GM10248 (cell line): ENCODE measurements at regions of chr7 and their contacts with region 1.

Region 1: DNA sequence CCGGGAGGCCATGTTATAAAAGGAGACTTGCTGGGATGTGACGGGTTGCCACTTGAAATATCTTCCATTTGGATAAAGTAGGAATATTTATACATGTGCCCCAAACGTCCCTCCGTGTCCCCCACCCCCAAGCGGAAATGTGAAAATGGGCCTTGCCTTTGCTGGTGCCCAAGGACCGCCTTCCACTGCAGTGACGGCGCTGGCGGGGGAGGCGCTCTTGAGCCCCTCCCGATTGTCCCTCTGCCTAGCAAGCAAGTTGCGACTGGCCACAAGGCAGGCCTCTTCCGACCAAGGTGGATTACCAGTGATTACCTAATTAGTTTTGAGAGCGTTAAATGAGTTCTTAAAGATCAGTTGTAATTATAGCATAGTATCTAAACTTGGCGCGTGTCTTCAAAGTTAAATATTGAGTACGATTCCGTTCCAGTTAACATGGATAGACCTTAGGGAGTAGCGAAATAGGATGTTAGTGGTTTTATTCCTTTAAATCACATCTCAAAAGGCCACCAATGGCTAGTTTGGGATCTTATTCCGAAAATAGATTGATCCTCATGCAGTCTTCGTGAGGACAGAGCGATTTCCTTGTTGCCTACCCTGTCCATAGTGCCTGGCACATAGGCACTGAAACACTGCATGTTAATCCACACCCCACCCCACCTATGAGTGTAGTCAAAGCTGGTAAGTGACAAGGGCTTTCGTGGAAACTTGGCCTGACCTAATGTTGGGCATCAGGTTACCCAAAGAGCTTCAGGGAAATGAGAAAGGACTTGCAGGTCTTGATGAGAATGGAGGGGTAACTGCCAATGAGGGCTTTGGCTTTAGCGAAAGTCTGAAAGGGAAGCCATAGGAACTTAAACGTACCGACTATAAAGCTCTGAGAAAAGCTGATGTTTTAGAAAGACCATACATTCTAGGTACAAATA is 1.1 kb downstream of the PPIA start:
- DNase-seq: peak; percentile 79
- CTCF ChIP-seq: peak; percentile 59

Region 2: DNA sequence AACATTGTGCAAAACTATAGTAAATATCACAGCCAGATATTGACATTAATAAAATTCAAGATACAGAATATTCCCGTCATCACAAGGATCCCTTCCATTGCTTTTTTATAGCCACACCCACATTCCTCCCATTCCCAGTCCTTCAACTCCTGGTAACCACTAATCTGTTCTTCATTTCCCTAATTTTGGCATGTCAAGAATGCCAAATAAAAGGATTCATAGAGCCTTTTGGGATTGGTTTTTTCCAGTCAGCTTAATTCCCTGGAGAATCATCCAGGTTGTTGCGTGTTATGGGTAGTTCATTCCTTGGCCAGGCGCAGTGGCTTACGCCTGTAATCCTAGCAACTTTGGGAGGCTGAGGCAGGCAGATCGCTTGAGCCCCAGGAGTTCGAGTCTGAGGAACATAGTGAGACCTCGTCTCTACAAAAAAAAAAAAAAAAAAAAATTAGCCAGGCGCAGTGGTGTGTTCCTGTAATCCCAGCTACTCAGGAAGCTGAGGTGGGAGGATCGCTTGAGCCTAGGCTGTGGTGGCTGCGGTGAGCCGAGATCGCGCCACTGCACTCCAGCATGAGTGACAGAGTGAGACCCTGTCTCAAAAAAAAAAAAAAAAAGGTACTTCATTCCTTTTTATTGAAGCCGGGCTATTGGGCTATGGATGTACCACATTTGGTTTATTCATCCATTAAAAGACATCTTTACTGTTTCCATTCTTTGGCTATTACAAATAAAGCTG is 188.5 kb before region 1 on chr7:
- CTCF ChIA-PET with region 1: interaction called, 3 read pairs
- POLR2A ChIA-PET with region 1: interaction called, 10 read pairs
- DNase-seq: no peak
- CTCF ChIP-seq: no peak

Region 3: DNA sequence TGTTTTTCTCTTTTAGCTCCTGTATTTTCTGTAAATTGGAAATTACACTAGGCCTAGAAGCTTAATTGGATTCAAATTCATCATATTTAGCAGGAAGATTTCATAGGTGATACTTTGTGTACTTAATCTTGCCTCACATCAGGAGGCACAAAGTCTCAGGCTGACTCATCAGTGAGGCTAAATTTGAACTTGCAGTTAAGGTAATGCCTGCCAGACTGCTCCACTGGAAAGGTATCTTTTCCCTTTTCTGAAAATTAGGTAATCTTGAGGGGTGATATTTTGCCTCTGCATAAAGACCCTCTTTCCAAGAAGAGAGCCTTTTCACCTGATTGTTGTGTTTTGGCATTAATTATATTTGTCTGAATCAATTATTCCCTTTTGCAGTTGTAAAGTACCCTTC is 13.5 kb after region 1 on chr7:
- CTCF ChIA-PET with region 1: interaction called, 24 read pairs
- POLR2A ChIA-PET with region 1: interaction called, 3 read pairs
- DNase-seq: no peak
- CTCF ChIP-seq: no peak